ENCODE measurements at regions of chr10 and their contacts with region 1.

Region 1: DNA sequence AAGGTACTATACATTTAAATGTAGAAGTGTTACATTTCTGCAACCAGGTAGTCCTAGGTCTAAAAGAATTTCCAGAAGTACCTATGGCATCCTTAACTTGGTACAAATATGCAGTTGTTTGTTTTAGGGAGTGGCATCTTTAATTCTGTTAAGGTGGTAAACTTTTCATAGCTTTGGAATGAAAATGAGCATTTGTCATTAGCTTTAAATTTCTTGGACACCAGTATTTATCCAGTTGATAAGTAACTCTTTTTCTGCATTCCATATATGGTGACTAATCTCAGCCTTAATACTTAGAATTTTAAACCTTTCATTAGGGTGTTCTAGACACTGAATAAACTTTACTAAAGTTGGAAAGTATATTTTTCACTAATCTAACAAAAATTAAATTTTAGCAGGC is 10.8 kb downstream of the SLF2 start:
- DNase-seq: no peak
- H3K4me3 Mint-ChIP-seq: no peak overlapping the region
- H3K27ac Mint-ChIP-seq: no peak overlapping the region
- H3K4me1 Mint-ChIP-seq: no peaks in the 10 kb centered on the region
- H3K27me3 Mint-ChIP-seq: no peaks in the 10 kb centered on the region

Region 2: DNA sequence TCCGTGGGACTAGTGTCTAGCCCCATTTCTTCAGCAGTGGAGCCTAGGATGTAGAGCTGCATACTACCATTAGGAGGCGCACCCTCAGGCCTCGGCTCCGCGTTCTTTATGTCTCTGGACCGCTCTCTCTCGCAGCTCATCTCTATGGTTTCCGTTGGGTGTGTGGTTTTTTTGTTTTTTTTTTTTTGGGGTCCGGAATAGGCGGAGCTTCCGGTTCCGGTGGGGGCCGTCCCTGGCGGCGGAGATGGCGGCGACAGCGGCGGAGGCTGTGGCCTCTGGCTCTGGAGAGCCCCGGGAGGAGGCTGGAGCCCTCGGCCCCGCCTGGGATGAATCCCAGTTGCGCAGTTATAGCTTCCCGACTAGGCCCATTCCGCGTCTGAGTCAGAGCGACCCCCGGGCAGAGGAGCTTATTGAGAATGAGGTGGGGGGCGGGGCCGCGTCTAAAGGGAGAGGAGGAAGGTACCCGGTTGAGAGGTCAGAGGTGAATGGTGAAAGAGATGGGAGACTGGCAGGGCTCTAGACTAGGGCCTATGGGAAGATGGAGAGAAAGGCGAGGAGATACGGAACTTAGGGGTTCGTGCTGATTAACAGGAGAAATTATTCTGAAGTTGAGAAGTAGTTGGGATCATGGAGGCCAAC is 387.7 kb before region 1 on chr10 and contains the start of gene HIF1AN:
- CTCF ChIA-PET with region 1: no interaction called
- DNase-seq: peak; percentile 92
- H3K4me3 Mint-ChIP-seq: no peak within 1 kb of the TSS
- H3K27ac Mint-ChIP-seq: no peak within 1 kb of the TSS
- H3K4me1 Mint-ChIP-seq: peaks cover 16% of the 10 kb centered on the region
- H3K27me3 Mint-ChIP-seq: no peaks in the 10 kb centered on the region

Region 3: DNA sequence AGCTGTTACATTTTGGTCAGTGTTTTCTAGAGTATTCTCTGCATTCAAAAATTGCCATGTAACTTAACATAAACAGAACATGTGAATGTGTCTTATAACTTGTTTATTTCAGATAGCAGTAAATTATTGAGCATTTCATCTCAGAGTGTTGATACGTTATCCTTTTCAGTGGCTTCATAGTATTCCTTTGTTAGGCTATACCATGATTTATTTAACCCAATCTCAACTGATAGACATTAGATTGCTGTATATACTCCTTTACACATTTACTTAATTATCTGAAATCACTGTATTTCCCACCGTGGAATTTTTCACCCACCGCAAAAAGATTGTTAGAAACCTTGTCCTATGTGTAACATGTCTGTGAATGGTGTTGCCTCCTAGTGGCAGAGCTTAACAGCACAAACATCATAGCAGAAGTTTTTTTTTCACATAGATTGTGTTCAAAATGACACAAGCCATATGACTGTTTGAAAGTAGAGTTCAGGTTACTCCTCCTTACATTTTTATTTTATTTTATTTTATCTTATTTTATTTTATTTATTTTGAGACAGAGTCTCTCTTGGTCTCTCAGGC is 10.6 kb after region 1 on chr10:
- CTCF ChIA-PET with region 1: interaction called, 10 read pairs
- DNase-seq: no peak
- H3K4me3 Mint-ChIP-seq: no peak overlapping the region
- H3K27ac Mint-ChIP-seq: no peak overlapping the region
- H3K4me1 Mint-ChIP-seq: no peaks in the 10 kb centered on the region
- H3K27me3 Mint-ChIP-seq: no peaks in the 10 kb centered on the region